ENCODE measurements at regions of chr2 and their contacts with region 1.

Region 1: DNA sequence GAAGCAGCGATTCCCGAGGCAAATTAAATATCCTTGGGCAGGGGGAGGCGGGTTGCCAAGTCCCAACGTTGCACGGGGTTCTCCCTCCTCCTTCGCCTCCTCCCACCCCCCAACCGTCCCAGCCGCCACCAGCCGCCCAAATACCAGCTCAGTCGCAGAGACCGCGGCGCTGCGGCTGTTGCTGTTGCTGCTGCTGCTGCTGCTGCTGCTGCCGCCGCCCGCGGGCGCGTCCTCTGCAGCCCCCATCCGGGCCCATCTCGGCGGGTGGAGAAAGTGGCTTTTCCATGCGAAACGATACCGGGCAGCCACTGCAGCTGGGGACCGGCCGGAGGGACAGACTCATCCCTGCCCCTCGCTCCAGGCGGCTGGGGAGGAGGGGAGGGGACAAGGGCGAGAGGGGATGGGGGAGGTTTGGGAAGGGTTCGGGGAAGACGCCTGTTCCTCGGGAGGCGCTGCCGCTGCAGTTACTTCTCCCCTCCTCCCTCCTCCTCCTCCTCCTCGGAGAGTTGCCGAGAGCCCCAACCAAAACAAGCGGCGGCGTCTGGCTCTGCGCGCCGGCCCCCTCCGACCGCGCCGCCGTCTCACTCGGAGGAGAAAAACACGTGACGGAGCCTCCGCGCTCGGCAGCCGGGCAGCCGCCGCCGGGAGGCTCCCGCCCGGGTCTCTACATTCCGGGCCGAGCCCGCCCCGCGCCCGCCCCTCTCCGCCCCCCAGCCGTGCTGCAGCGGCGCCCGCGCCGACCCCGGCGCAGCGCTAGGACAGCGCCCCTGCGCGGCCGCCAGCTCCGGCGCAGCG is at the start of gene IRS1:
- DNase-seq: peak in 32 of 35 experiments; percentile 25 to 78 (median 48)
- ATAC-seq: peak; percentile 62 to 72 (median 65)
- H3K4me3 ChIP-seq: peak within 1 kb of the TSS; percentile 76 to 90
- H3K4me3 Mint-ChIP-seq: peak within 1 kb of the TSS; percentile 86 to 90 (median 89)
- H3K27ac ChIP-seq: peak within 1 kb of the TSS; percentile 2
- H3K27ac Mint-ChIP-seq: peak within 1 kb of the TSS; percentile 80 to 87
- H3K4me1 ChIP-seq: peaks cover 9 to 34% of the 10 kb centered on the region in 2 experiments
- H3K4me1 Mint-ChIP-seq: peaks cover 33 to 49% (median 39%) of the 10 kb centered on the region in 3 donors
- H3K27me3 ChIP-seq: peaks cover 0 to 24% of the 10 kb centered on the region in 2 experiments
- H3K27me3 Mint-ChIP-seq: peaks cover 1 to 6% of the 10 kb centered on the region in 2 donors
- total RNA-seq, gene IRS1: 3.7 to 8.7 (median 6.7) TPM

Region 2: DNA sequence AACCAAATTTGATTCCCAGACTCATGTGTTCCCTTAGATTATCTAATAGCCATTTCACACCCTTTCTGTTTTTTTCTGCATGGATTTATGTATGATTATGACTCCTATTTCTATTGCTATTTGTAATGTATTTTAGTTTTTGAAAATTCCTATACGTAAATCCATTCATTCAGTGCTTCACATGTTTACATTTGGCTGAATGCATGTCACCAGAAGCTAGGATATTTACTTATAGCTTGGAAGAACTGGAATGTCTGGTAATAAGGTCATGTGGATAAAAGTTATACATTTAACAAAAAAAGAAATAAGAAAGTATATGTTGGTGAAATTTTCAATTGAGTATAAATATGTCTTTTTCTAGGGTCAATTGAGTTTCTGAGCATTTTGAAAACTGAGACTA is 1514.1 kb before region 1 on chr2:
- CTCF ChIA-PET with region 1: interaction called, 3 to 5 read pairs
- POLR2A ChIA-PET with region 1: interaction called in 1 of 2 experiments, 20 read pairs
- DNase-seq: no peak
- ATAC-seq: no peak
- H3K4me3 ChIP-seq: no peak overlapping the region
- H3K4me3 Mint-ChIP-seq: no peak overlapping the region
- H3K27ac ChIP-seq: no peak overlapping the region
- H3K27ac Mint-ChIP-seq: no peak overlapping the region
- H3K4me1 ChIP-seq: no peaks in the 10 kb centered on the region
- H3K4me1 Mint-ChIP-seq: peaks cover 1 to 9% (median 4%) of the 10 kb centered on the region in 3 donors
- H3K27me3 ChIP-seq: no peaks in the 10 kb centered on the region
- H3K27me3 Mint-ChIP-seq: no peaks in the 10 kb centered on the region

Region 3: DNA sequence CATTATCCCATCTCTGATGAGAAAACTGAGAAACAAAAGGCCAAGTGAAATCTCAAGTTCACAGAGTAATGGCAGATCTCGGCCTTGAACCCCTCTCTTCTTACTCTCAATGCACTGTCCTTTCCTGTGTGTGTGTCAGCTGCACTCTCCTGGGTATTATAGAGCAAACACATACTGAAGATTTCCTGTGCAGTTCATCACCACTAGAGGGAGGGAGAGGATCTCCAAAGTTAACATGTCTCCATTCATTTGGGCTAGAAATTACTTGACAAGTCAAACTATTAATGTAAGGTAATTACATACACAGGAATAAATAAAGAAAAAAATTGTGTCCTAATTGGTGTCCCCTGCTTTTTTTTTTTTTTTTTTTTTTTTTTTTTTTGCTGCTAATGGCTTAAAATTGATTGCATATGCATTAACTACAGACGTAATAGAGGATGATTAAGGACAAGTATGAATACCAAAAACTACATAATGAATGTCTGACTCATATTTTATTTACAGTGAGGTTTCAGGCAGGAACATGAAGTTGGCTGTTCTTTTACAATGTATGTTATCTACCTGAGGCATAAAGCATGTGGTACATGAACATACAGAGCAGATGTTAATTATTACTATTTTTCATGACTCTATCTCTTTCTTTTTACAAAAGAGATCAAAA is 1130.6 kb before region 1 on chr2:
- CTCF ChIA-PET with region 1: interaction called, 5 to 15 read pairs
- POLR2A ChIA-PET with region 1: no interaction called
- DNase-seq: peak in 8 of 35 experiments; percentile 2 to 67 (median 7)
- ATAC-seq: peak in 3 of 4 experiments; percentile 62 to 70 (median 68)
- H3K4me3 ChIP-seq: no peak overlapping the region
- H3K4me3 Mint-ChIP-seq: no peak overlapping the region
- H3K27ac ChIP-seq: no peak overlapping the region
- H3K27ac Mint-ChIP-seq: no peak overlapping the region
- H3K4me1 ChIP-seq: no peaks in the 10 kb centered on the region
- H3K4me1 Mint-ChIP-seq: no peaks in the 10 kb centered on the region
- H3K27me3 ChIP-seq: no peaks in the 10 kb centered on the region
- H3K27me3 Mint-ChIP-seq: peaks cover 7 to 14% of the 10 kb centered on the region in 2 donors

Region 4: DNA sequence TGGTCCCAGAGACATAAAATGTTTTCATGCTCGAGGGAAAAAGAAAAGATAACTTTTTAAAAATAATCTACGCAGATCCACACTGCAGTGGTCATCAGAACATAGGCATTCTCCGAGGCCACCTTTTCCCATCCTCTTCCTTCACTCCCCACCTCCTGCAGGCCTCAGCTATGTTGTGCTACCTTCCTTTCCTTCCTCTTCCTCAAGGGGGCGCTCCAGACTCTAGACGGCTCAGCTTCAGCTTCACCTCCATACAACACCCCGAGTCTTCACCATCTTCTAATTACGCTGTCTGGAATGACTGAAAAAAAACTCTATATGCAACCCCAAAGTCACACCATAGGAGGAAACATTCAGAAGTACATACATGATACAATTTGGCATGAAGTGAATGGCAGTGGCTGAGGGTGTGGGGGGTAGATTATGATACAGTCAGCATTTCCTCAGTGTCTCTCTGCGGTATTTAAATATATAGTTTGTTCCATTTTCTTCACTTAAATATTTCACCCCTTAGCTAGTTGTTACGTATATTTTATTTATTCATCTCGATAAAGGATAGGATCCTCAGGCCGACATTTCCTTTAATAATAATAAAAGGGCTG is 583.4 kb before region 1 on chr2:
- CTCF ChIA-PET with region 1: interaction called, 6 to 34 read pairs
- POLR2A ChIA-PET with region 1: no interaction called
- DNase-seq: peak in 33 of 35 experiments; percentile 3 to 66 (median 28)
- ATAC-seq: peak; percentile 40 to 83 (median 54)
- H3K4me3 ChIP-seq: no peak overlapping the region
- H3K4me3 Mint-ChIP-seq: no peak overlapping the region
- H3K27ac ChIP-seq: no peak overlapping the region
- H3K27ac Mint-ChIP-seq: no peak overlapping the region
- H3K4me1 ChIP-seq: no peaks in the 10 kb centered on the region
- H3K4me1 Mint-ChIP-seq: peaks cover 0 to 6% (median 0%) of the 10 kb centered on the region in 3 donors
- H3K27me3 ChIP-seq: no peaks in the 10 kb centered on the region
- H3K27me3 Mint-ChIP-seq: peaks cover 3 to 6% of the 10 kb centered on the region in 2 donors

Region 5: DNA sequence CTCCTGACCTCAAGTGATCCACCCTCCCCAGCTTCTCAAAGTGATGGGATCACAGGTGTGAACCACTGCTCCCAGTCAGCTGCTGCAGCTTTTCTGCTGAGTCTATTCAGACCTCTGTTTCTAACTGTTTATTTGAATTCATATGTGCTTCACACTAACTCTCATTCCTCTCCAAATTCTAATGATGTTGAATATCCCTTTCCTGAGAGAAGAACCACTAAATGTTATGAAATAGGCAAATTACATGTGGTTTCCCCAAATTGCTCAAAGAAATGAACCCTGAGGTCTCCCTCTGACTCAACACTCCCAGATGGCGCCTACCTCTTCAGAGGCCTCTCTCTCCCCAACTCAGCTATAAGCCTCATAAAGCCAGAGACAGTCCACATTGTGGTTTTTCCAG is 98.3 kb before region 1 on chr2:
- CTCF ChIA-PET with region 1: no interaction called
- POLR2A ChIA-PET with region 1: no interaction called
- DNase-seq: no peak
- ATAC-seq: no peak
- H3K4me3 ChIP-seq: no peak overlapping the region
- H3K4me3 Mint-ChIP-seq: no peak overlapping the region
- H3K27ac ChIP-seq: no peak overlapping the region
- H3K27ac Mint-ChIP-seq: no peak overlapping the region
- H3K4me1 ChIP-seq: no peaks in the 10 kb centered on the region
- H3K4me1 Mint-ChIP-seq: no peaks in the 10 kb centered on the region
- H3K27me3 ChIP-seq: peaks cover 0 to 2% of the 10 kb centered on the region in 2 experiments
- H3K27me3 Mint-ChIP-seq: peaks cover 0 to 4% of the 10 kb centered on the region in 2 donors

Region 6: GRCh38 chr2:226835796-226836547 is 36.6 kb after region 1 on chr2 and contains the start of gene RHBDD1:
- CTCF ChIA-PET with region 1: interaction called, 7 to 33 read pairs
- POLR2A ChIA-PET with region 1: interaction called, 3 to 12 read pairs
- DNase-seq: peak; percentile 90 to 97 (median 93)
- ATAC-seq: peak; percentile 86 to 90 (median 87)
- H3K4me3 ChIP-seq: peak within 1 kb of the TSS; percentile 72 to 73
- H3K4me3 Mint-ChIP-seq: peak within 1 kb of the TSS; percentile 86 to 99 (median 96)
- H3K27ac ChIP-seq: peak within 1 kb of the TSS; percentile 92
- H3K27ac Mint-ChIP-seq: peak within 1 kb of the TSS; percentile 99 to 100
- H3K4me1 ChIP-seq: peaks cover 38 to 50% of the 10 kb centered on the region in 2 experiments
- H3K4me1 Mint-ChIP-seq: peaks cover 57 to 64% (median 63%) of the 10 kb centered on the region in 3 donors
- H3K27me3 ChIP-seq: no peaks in the 10 kb centered on the region
- H3K27me3 Mint-ChIP-seq: no peaks in the 10 kb centered on the region
- total RNA-seq, gene RHBDD1: 41.0 to 53.2 (median 47.8) TPM

Region 7: GRCh38 chr2:226984750-226985582 is 185.6 kb after region 1 on chr2:
- CTCF ChIA-PET with region 1: interaction called, 3 to 4 read pairs
- POLR2A ChIA-PET with region 1: interaction called in 1 of 2 experiments, 11 read pairs
- DNase-seq: peak in 12 of 35 experiments; percentile 4 to 57 (median 14)
- ATAC-seq: peak; percentile 41 to 87 (median 76)
- H3K4me3 ChIP-seq: no peak overlapping the region
- H3K4me3 Mint-ChIP-seq: no peak overlapping the region
- H3K27ac ChIP-seq: no peak overlapping the region
- H3K27ac Mint-ChIP-seq: peak overlapping the region in 1 of 2 donors; percentile 58
- H3K4me1 ChIP-seq: peaks cover 7 to 8% of the 10 kb centered on the region in 2 experiments
- H3K4me1 Mint-ChIP-seq: peaks cover 22 to 30% (median 24%) of the 10 kb centered on the region in 3 donors
- H3K27me3 ChIP-seq: no peaks in the 10 kb centered on the region
- H3K27me3 Mint-ChIP-seq: no peaks in the 10 kb centered on the region

Measured in T-cell (primary cell).